Esophagus muscularis mucosa (tissue), 4 donors: ENCODE measurements at regions of chr1 and their contacts with region 1.

Region 1: GRCh38 chr1:239898062-239898730 is 193.5 kb upstream of the FMN2 start:
- DNase-seq: peak; percentile 96
- H3K4me3 ChIP-seq: peak overlapping the region; percentile 16 to 37 (median 26)
- H3K27ac ChIP-seq: peak overlapping the region; percentile 39 to 63 (median 60)
- H3K4me1 ChIP-seq: peaks cover 0 to 29% (median 25%) of the 10 kb centered on the region in 4 donors
- H3K27me3 ChIP-seq: no peaks in the 10 kb centered on the region
- CTCF ChIP-seq: peak; percentile 92 to 98 (median 93)
- EP300 ChIP-seq: no peak
- POLR2A ChIP-seq: no peak

Region 2: GRCh38 chr1:239413916-239414315 is 484.3 kb before region 1 on chr1:
- intact Hi-C with region 1: loop called (anchors 5 kb)
- DNase-seq: no peak
- H3K4me3 ChIP-seq: peak overlapping the region in 2 of 4 donors; percentile 1 to 22
- H3K27ac ChIP-seq: peak overlapping the region; percentile 4 to 64 (median 59)
- H3K4me1 ChIP-seq: peaks cover 0 to 82% (median 63%) of the 10 kb centered on the region in 4 donors
- H3K27me3 ChIP-seq: no peaks in the 10 kb centered on the region
- CTCF ChIP-seq: no peak
- EP300 ChIP-seq: no peak
- POLR2A ChIP-seq: no peak